Naive thymus-derived CD4-positive, alpha-beta T cell (primary cell): ENCODE measurements at regions of chr6 and their contacts with region 1.

Region 1: DNA sequence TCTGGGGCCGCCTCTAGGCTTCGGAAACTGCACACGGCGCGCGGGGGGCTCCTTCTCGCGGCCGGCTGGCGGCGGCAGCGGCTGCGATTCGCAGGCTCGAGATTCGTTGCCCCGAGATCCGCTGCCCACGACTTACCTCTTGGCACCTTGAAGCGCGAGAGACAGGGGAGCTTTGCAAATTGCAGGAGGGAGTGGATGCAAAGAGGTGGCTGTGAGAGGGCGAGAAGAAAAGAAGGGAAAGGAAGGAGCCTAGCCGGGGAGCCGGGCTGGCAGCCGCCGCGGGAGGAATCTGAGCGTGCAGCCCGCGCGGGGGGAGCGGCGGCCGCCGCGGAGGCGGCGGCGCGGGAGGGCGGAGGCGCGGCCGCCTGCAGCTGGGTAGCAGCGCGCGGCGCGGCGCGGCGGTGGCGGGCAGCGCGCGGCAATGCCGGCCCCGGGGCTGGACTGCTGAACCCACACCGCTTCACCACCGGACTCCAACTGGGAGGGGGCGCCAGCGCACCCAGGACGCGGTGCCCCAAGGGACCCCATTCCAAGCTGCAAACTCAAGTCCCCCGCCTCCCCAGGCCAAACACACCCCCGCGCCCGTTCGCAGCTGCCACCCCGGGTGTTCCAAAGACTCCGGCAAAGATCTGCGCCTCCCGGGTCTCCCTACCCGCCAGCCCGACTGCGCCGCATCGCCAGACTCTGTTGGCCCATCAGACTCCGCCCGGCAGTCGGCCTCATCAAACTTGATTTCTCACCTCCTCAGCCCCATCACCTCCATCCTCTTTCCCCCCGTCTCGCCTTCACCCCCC is 44.2 kb upstream of the SUPT3H start:
- DNase-seq: peak in 7 of 9 donors; percentile 41 to 69 (median 44)
- ATAC-seq: peak; percentile 52
- H3K4me3 ChIP-seq: peak overlapping the region; percentile 80
- H3K4me3 Mint-ChIP-seq: peak overlapping the region; percentile 89 to 99 (median 94)
- H3K27ac ChIP-seq: peak overlapping the region; percentile 53
- H3K27ac Mint-ChIP-seq: peak overlapping the region; percentile 54 to 95 (median 81)
- H3K4me1 ChIP-seq: peaks cover 17 to 24% of the 10 kb centered on the region in 2 donors
- H3K4me1 Mint-ChIP-seq: peaks cover 13 to 52% (median 43%) of the 10 kb centered on the region in 7 donors
- H3K27me3 ChIP-seq: peaks cover 8% of the 10 kb centered on the region in 2 donors
- H3K27me3 Mint-ChIP-seq: peaks cover 0 to 48% (median 26%) of the 10 kb centered on the region in 5 donors

Region 2: DNA sequence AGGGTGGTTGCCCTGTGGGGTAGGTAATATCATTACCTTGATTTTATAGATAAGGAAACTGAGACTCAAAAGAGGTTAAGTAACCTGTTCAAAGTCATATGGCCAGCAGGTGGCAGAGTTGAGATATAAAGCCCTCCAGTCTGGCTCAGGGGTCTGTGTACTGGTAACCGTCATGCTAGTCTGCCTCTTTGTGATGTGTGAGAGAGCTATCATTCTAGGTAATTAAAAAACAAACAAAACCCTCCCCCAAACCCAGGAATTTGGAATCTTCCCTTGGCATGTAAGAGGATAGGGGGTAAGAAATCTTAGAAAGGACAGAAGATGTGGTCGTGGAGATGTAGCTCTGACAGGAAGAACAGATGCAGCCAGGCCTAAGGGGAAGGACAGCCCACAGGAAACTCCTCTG is 828.4 kb before region 1 on chr6:
- CTCF ChIA-PET with region 1: interaction called, 3 read pairs
- POLR2A ChIA-PET with region 1: no interaction called
- intact Hi-C with region 1: loop called (anchors 2 to 5 kb)
- DNase-seq: peak in 8 of 9 donors; percentile 8 to 48 (median 36)
- ATAC-seq: peak; percentile 63
- H3K4me3 ChIP-seq: no peak overlapping the region
- H3K4me3 Mint-ChIP-seq: no peak overlapping the region
- H3K27ac ChIP-seq: no peak overlapping the region
- H3K27ac Mint-ChIP-seq: peak overlapping the region in 1 of 9 donors; percentile 59
- H3K4me1 ChIP-seq: no peaks in the 10 kb centered on the region
- H3K4me1 Mint-ChIP-seq: peaks cover 0 to 9% (median 0%) of the 10 kb centered on the region in 7 donors
- H3K27me3 ChIP-seq: no peaks in the 10 kb centered on the region
- H3K27me3 Mint-ChIP-seq: peaks cover 11 to 20% (median 14%) of the 10 kb centered on the region in 5 donors

Region 3: DNA sequence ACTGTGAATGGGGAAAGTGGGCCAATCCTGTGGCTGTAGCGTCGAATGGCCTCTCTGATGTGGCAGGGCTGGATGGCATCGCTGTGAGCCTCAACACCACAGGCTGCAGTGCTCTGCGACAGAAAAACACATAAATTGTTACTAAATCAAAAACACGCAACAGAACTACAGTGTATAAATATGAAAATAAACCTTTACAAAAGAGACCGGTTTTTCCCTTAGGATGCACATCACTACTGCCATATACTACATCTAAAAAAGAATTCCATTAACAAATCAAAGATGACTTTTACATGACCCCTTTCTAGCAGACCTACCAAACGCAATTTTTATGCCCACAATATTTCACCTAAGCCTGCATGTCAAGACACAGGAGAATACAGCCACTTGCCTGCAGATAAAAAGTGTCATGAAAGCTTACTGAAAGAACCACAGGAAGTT is 489.2 kb before region 1 on chr6:
- CTCF ChIA-PET with region 1: no interaction called
- POLR2A ChIA-PET with region 1: no interaction called
- intact Hi-C with region 1: loop called (anchors 1 to 2 kb)
- DNase-seq: peak in 7 of 9 donors; percentile 46 to 66 (median 58)
- ATAC-seq: peak; percentile 91
- H3K4me3 ChIP-seq: peak overlapping the region; percentile 37
- H3K4me3 Mint-ChIP-seq: peak overlapping the region; percentile 78 to 98 (median 88)
- H3K27ac ChIP-seq: peak overlapping the region; percentile 71
- H3K27ac Mint-ChIP-seq: peak overlapping the region; percentile 92 to 99 (median 96)
- H3K4me1 ChIP-seq: peaks cover 17 to 42% of the 10 kb centered on the region in 2 donors
- H3K4me1 Mint-ChIP-seq: peaks cover 26 to 67% (median 60%) of the 10 kb centered on the region in 7 donors
- H3K27me3 ChIP-seq: no peaks in the 10 kb centered on the region
- H3K27me3 Mint-ChIP-seq: no peaks in the 10 kb centered on the region

Region 4: GRCh38 chr6:45105170-45105820 is 316.6 kb before region 1 on chr6:
- CTCF ChIA-PET with region 1: no interaction called
- POLR2A ChIA-PET with region 1: no interaction called
- intact Hi-C with region 1: no loop called
- DNase-seq: no peak
- ATAC-seq: no peak
- H3K4me3 ChIP-seq: no peak overlapping the region
- H3K4me3 Mint-ChIP-seq: no peak overlapping the region
- H3K27ac ChIP-seq: no peak overlapping the region
- H3K27ac Mint-ChIP-seq: no peak overlapping the region
- H3K4me1 ChIP-seq: no peaks in the 10 kb centered on the region
- H3K4me1 Mint-ChIP-seq: peaks cover 3 to 21% (median 14%) of the 10 kb centered on the region in 7 donors
- H3K27me3 ChIP-seq: no peaks in the 10 kb centered on the region
- H3K27me3 Mint-ChIP-seq: no peaks in the 10 kb centered on the region

Region 5: GRCh38 chr6:45156075-45156474 is 265.8 kb before region 1 on chr6:
- CTCF ChIA-PET with region 1: interaction called, 3 read pairs
- POLR2A ChIA-PET with region 1: no interaction called
- intact Hi-C with region 1: loop called in 1 of 2 experiments (anchors 5 kb)
- DNase-seq: peak in 7 of 9 donors; percentile 46 to 81 (median 76)
- ATAC-seq: peak; percentile 96
- H3K4me3 ChIP-seq: no peak overlapping the region
- H3K4me3 Mint-ChIP-seq: peak overlapping the region in 9 of 10 donors; percentile 0 to 63 (median 39)
- H3K27ac ChIP-seq: no peak overlapping the region
- H3K27ac Mint-ChIP-seq: peak overlapping the region in 8 of 9 donors; percentile 27 to 89 (median 60)
- H3K4me1 ChIP-seq: peaks cover 7 to 12% of the 10 kb centered on the region in 2 donors
- H3K4me1 Mint-ChIP-seq: peaks cover 2 to 43% (median 29%) of the 10 kb centered on the region in 7 donors
- H3K27me3 ChIP-seq: no peaks in the 10 kb centered on the region
- H3K27me3 Mint-ChIP-seq: no peaks in the 10 kb centered on the region

Region 6: DNA sequence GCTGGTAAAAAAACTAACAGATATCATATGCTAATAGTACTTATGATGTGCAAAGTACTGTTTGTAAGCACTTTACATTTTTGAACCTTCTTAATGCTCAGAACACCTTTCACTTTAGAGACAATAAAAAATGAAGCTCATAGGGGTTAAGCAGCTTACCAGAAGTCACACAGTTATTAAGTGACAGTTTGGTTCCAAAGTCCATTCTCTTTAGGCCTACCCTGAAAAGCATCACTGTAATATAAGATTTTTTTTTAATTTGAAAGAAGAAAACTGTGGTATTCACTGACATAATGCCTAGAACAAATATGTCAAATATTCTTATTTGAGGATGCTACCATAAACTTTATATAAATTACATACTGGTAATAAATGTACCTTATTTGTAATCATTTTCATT is 221.4 kb before region 1 on chr6:
- CTCF ChIA-PET with region 1: no interaction called
- POLR2A ChIA-PET with region 1: no interaction called
- intact Hi-C with region 1: no loop called
- DNase-seq: no peak
- ATAC-seq: no peak
- H3K4me3 ChIP-seq: no peak overlapping the region
- H3K4me3 Mint-ChIP-seq: no peak overlapping the region
- H3K27ac ChIP-seq: no peak overlapping the region
- H3K27ac Mint-ChIP-seq: no peak overlapping the region
- H3K4me1 ChIP-seq: no peaks in the 10 kb centered on the region
- H3K4me1 Mint-ChIP-seq: peaks cover 0 to 18% (median 5%) of the 10 kb centered on the region in 7 donors
- H3K27me3 ChIP-seq: no peaks in the 10 kb centered on the region
- H3K27me3 Mint-ChIP-seq: no peaks in the 10 kb centered on the region

Region 7: GRCh38 chr6:45377554-45378333 is 44.2 kb before region 1 on chr6 and contains the start of gene SUPT3H:
- CTCF ChIA-PET with region 1: interaction called, 4 read pairs
- POLR2A ChIA-PET with region 1: interaction called, 8 read pairs
- intact Hi-C with region 1: loop called (anchors 1 kb)
- DNase-seq: peak; percentile 87 to 96 (median 89)
- ATAC-seq: peak; percentile 90
- H3K4me3 ChIP-seq: peak within 1 kb of the TSS; percentile 75
- H3K4me3 Mint-ChIP-seq: peak within 1 kb of the TSS; percentile 89 to 100 (median 98)
- H3K27ac ChIP-seq: peak within 1 kb of the TSS; percentile 86
- H3K27ac Mint-ChIP-seq: peak within 1 kb of the TSS; percentile 96 to 100 (median 98)
- H3K4me1 ChIP-seq: peaks cover 0 to 14% of the 10 kb centered on the region in 2 donors
- H3K4me1 Mint-ChIP-seq: peaks cover 14 to 35% (median 28%) of the 10 kb centered on the region in 7 donors
- H3K27me3 ChIP-seq: no peaks in the 10 kb centered on the region
- H3K27me3 Mint-ChIP-seq: no peaks in the 10 kb centered on the region
- total RNA-seq, gene SUPT3H: 10.0 to 16.0 (median 12.7) TPM

Region 8: DNA sequence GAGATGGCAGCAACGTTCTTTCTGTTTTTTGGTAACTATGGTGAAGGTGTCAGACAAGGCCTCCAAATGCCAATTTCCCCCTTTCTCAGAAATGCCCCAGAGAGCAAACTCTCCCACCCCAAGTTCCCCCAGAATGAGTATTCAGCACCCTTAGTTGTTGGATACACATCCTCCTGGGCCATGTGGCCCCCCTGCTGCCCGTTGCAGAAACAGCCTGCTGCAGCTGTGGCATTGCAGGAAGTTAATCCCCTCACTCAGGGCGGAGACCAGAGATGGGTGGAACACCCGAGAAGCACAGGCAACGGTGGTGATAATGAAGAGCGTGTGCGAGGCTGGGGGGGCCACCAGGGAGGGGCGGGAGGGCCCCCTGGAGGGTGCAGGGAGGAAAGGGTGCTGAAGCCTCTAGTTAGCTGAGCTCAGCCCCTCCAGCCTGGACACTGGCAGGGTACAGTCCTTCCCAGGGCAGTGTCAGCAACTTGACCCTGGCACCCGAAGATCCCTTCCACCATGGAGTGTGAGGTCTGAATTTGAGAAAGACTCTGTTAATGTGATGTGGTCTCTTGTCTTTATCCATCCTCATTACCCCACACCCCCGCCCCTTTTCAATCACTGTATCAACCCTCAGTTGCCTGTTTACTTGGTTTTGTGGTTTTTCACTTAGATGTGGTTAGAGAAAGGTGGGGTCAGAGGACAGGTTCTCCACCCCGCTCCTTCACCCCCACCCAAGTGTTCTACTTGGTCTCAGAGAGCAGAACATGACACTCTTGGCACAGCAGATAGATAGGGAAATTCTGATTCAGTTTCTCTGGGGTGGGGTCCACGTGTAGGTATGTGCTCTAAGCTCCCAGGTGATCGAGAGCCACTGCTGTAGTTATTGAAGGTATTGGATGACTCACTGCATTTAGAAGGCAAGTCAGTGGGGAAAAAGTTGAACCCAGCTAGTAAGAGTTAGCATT is 164.6 kb after region 1 on chr6:
- CTCF ChIA-PET with region 1: interaction called, 3 read pairs
- POLR2A ChIA-PET with region 1: interaction called, 21 read pairs
- intact Hi-C with region 1: loop called (anchors 1 kb)
- DNase-seq: peak; percentile 11 to 93 (median 86)
- ATAC-seq: peak; percentile 93
- H3K4me3 ChIP-seq: peak overlapping the region; percentile 4
- H3K4me3 Mint-ChIP-seq: peak overlapping the region; percentile 76 to 89 (median 81)
- H3K27ac ChIP-seq: peak overlapping the region; percentile 9
- H3K27ac Mint-ChIP-seq: peak overlapping the region; percentile 59 to 97 (median 89)
- H3K4me1 ChIP-seq: peaks cover 48 to 67% of the 10 kb centered on the region in 2 donors
- H3K4me1 Mint-ChIP-seq: peaks cover 40 to 70% (median 69%) of the 10 kb centered on the region in 7 donors
- H3K27me3 ChIP-seq: no peaks in the 10 kb centered on the region
- H3K27me3 Mint-ChIP-seq: no peaks in the 10 kb centered on the region

Region 9: GRCh38 chr6:45922728-45923351 is 500.9 kb after region 1 on chr6:
- CTCF ChIA-PET with region 1: interaction called, 3 read pairs
- POLR2A ChIA-PET with region 1: no interaction called
- intact Hi-C with region 1: loop called (anchors 2 kb)
- DNase-seq: peak in 8 of 9 donors; percentile 13 to 59 (median 36)
- ATAC-seq: peak; percentile 67
- H3K4me3 ChIP-seq: no peak overlapping the region
- H3K4me3 Mint-ChIP-seq: no peak overlapping the region
- H3K27ac ChIP-seq: no peak overlapping the region
- H3K27ac Mint-ChIP-seq: peak overlapping the region in 2 of 9 donors; percentile 28 to 75
- H3K4me1 ChIP-seq: no peaks in the 10 kb centered on the region
- H3K4me1 Mint-ChIP-seq: peaks cover 0 to 42% (median 3%) of the 10 kb centered on the region in 7 donors
- H3K27me3 ChIP-seq: no peaks in the 10 kb centered on the region
- H3K27me3 Mint-ChIP-seq: peaks cover 0 to 11% (median 0%) of the 10 kb centered on the region in 5 donors